Activated CD8-positive, alpha-beta memory T cell treated with anti-CD3 and anti-CD28 coated beads, Interleukin-2, amount 10 ng/mL, durations not matched to agents 7 days and 5 days (primary cell): ENCODE measurements at regions of chr9 and their contacts with region 1.

Region 1: DNA sequence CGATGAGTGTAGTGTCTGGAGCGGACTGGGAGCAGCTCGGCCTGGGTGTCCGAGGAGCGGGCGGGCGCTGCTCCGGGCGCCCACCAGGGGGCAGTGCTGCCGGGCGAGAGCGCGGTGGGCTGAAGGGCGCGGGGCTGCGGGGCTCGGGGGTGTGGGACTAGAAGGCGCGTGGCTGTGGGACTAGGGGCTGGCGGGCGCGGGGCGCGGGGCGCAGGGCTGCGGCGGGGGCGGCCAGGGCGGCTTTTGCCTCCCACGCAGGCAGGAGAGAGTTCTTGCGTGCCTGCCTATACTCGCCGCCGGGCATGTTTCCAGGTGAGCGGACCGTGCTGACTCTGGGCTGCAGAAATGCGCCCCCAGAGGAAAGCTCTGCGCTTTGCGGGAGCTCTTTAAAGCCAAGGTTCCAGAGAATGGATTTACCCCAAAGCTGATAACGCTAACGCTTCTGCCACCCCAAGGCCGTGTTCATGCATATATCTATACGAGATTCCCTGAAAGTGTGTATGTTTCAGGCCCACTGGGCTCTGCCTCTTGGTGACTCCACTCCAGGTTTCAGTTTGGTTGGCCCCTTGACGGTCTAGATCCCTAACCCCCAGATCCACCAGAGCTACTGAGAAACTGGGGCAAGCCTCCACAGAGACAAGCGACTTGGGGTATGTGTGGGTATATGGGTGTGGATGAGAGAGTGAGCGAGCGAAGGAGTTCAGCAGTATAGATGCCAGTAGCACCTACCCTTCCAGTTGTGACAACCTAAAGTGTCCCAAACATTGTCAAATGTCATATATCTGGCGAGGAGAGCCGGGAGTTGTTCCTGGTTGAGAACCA is 56.2 kb downstream of the ACER2 start:
- DNase-seq: peak; percentile 76
- ATAC-seq: peak; percentile 96
- H3K4me3 Mint-ChIP-seq: peak overlapping the region; percentile 74
- H3K27ac Mint-ChIP-seq: no peak overlapping the region
- H3K4me1 Mint-ChIP-seq: peaks cover 11% of the 10 kb centered on the region
- H3K27me3 Mint-ChIP-seq: no peaks in the 10 kb centered on the region

Region 2: DNA sequence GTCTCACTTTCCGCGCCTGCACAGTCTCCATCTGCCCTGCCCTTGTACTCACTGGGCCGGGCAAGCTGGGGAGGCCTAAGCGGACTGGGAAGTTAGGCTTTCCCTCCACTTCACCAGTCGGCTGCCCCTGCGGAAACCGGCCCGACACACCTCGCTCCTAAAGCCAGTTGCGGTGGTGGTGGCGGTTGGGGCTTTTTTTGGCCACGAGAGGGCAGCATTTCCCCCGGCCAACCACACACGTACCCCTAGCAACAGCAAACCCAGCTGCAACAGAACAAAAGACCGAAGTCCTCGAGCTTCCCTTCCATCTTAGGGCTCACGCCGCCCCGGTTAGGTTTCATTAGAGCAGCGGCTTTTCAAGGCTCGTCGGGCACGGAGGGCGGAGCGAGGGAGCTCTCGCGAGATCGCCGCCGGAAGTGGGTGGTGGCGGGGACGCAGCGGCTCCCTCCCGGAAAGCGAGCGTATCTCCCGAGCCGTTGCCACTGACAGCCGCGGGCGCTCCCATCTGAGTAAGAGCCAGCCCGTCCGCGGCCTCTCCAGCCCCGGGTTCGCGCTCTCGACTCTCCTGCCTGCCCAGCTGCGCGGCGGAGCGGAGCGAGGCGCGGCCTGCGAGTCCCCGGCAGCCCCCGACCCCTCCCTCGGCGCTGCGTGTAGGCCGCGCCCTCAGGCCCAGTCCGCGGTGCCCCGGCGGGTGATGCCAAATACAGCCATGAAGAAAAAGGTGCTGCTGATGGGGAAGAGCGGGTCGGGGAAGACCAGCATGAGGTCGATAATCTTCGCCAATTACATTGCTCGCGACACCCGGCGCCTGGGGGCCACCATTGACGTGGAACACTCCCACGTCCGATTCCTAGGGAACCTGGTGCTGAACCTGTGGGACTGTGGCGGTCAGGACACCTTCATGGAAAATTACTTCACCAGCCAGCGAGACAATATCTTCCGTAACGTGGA is 415.7 kb before region 1 on chr9 and contains the start of gene RRAGA:
- CTCF ChIA-PET with region 1: interaction called, 10 read pairs
- DNase-seq: peak; percentile 96
- ATAC-seq: peak; percentile 92
- H3K4me3 Mint-ChIP-seq: peak within 1 kb of the TSS; percentile 93
- H3K27ac Mint-ChIP-seq: peak within 1 kb of the TSS; percentile 99
- H3K4me1 Mint-ChIP-seq: peaks cover 28% of the 10 kb centered on the region
- H3K27me3 Mint-ChIP-seq: no peaks in the 10 kb centered on the region
- total RNA-seq, gene RRAGA: 43.5 to 49.7 TPM

Region 3: GRCh38 chr9:19161257-19162025 is 303.5 kb before region 1 on chr9:
- CTCF ChIA-PET with region 1: interaction called, 12 read pairs
- DNase-seq: peak; percentile 80
- ATAC-seq: peak; percentile 98
- H3K4me3 Mint-ChIP-seq: peak overlapping the region; percentile 33
- H3K27ac Mint-ChIP-seq: peak overlapping the region; percentile 87
- H3K4me1 Mint-ChIP-seq: peaks cover 23% of the 10 kb centered on the region
- H3K27me3 Mint-ChIP-seq: no peaks in the 10 kb centered on the region

Region 4: GRCh38 chr9:19408693-19409400 is 56.1 kb before region 1 on chr9 and contains the start of gene ACER2:
- CTCF ChIA-PET with region 1: interaction called, 11 read pairs
- DNase-seq: peak; percentile 93
- ATAC-seq: peak; percentile 93
- H3K4me3 Mint-ChIP-seq: peak within 1 kb of the TSS; percentile 96
- H3K27ac Mint-ChIP-seq: peak within 1 kb of the TSS; percentile 70
- H3K4me1 Mint-ChIP-seq: peaks cover 14% of the 10 kb centered on the region
- H3K27me3 Mint-ChIP-seq: peaks cover 6% of the 10 kb centered on the region
- total RNA-seq, gene ACER2: 1.9 to 2.1 TPM

Region 5: DNA sequence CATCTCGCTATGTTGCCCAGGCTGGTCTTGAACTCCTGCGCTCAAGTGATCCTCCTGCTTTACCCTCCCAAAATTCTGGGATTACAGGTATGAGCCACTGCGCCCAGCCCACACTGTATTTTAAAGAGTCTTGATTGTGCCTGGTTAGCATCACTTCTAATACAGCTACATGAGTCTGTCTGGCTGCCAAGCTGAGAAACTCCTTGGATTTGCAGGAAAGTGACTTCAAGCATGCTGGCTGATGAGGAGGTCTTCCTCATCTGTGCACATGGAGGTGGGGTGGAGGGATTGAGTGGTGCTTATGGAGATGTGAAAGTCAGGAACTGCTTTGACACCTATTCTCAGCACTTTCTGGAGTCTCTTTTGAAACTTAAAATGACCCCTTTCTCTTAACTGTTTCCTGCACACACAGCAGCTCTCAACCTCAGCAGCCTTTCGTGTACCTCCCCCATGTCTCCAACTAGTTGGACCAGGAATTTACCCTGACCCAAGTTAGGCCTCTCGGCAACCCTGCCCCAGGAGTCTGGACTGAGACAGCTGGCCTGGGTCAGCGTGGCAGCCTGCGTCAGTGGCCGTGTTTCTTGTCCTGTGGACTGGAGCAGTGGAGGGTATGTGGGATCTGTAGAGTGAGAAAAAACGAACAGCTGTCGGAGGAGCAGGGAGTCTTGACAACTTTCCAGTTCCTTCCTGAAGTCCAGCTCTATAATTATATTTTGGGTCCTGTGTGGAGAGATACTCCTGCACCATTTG is 16.3 kb after region 1 on chr9:
- CTCF ChIA-PET with region 1: interaction called, 40 read pairs
- DNase-seq: no peak
- ATAC-seq: no peak
- H3K4me3 Mint-ChIP-seq: no peak overlapping the region
- H3K27ac Mint-ChIP-seq: no peak overlapping the region
- H3K4me1 Mint-ChIP-seq: no peaks in the 10 kb centered on the region
- H3K27me3 Mint-ChIP-seq: peaks cover 37% of the 10 kb centered on the region